ENCODE measurements at regions of chr15 and their contacts with region 1.

Region 1: GRCh38 chr15:49876401-49877038 is 242.5 kb downstream of the ATP8B4 start:
- ATAC-seq: peak in 2 of 8 experiments; percentile 38 to 49
- H3K4me3 ChIP-seq: no peak overlapping the region
- H3K27ac ChIP-seq: no peak overlapping the region
- H3K4me1 ChIP-seq: no peaks in the 10 kb centered on the region

Region 2: DNA sequence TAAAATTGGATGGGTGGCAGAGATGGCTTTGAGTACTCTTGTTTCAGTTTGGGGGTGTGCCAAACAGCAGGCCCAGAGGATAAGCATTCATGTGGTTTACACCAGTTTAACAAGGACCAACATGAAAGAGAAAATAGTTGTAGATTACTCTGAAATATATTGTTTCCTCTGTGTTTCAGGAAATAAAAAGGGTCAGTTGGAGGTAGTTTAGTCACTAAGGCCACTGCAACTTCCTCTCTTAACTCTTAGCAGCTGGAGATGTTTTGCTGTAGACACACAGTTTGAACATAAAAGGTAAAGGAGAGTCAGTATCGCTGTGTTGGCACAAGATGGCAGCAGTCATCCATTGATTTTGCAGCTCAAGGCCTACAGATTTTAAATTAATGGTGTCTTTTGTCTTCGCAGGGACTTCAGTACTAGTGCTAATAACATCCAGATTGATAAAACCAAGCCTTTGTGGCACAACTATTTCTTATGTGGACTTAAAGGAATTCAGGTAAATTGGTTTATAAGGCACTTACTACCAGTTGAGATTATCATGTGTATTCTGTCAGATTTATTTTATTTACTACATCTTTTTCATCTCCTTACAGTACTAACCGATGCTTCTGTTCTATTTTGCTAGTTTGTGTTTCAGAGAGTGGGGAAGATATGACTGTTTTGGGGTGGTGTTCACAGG is 640.9 kb before region 1 on chr15:
- in situ Hi-C with region 1: loop called in 1 of 9 experiments (anchors 25 kb)
- ATAC-seq: peak; percentile 58 to 92 (median 81)
- H3K4me3 ChIP-seq: no peak overlapping the region
- H3K27ac ChIP-seq: no peak overlapping the region
- H3K4me1 ChIP-seq: peaks cover 0 to 5% of the 10 kb centered on the region in 2 donors

Region 3: DNA sequence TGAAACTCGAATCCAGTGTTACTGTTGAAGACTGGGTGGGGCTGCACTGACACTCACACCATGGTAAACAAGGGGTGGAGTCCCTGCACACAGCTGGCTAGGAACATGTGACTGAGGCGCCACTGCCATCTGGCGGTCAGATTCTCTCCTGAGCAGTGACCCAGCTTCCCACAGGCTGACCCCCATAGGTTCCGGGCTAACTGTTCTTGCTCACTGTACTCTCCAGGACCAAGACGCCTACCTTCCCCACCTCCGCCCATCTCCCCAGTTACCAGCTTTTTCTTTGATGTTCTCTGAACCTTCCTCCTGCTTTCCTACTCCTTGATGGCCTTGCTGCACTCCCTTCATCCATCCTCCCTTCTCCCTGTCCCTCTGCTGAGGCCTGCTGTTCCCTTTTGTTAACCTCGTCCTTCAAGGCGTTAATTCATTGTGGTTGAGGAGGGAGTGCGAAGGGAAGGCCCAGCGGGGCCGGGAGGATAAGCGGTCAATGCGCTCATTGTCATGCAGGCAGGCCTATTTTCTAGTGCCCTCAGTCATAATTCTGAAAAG is 127.3 kb after region 1 on chr15:
- in situ Hi-C with region 1: loop called in 1 of 9 experiments (anchors 10 kb)
- ATAC-seq: peak; percentile 99 to 100 (median 100)
- H3K4me3 ChIP-seq: no peak overlapping the region
- H3K27ac ChIP-seq: peak overlapping the region in 1 of 2 donors; percentile 27
- H3K4me1 ChIP-seq: peaks cover 9 to 10% of the 10 kb centered on the region in 2 donors

Region 4: DNA sequence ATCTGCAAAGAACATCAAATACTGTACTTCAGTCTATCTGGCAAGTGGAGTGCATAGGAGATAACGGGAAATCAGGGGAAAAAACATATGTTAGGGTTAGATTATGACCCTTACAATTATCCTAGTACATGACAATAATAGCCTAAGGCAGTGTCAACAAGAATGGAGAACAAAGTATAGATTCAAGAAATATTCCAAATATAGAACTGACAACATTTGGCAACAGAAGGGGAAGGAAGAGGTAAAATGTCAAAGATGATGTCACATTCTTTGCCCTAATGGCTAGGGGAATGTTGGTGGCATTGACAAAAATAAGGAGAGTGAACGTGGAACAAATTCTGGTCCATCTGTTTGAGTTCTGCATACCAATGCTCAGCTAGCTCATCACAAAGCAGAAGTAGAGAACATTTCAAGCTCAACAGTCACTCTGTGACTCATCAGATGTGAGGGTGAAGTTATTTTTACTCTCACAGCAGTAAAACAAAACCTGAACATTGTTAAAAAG is 258.1 kb after region 1 on chr15:
- in situ Hi-C with region 1: no loop called
- ATAC-seq: peak in 2 of 8 experiments; percentile 36 to 43
- H3K4me3 ChIP-seq: no peak overlapping the region
- H3K27ac ChIP-seq: no peak overlapping the region
- H3K4me1 ChIP-seq: peaks cover 7 to 9% of the 10 kb centered on the region in 2 donors